ENCODE measurements at regions of chr4 and their contacts with region 1.

Region 1: DNA sequence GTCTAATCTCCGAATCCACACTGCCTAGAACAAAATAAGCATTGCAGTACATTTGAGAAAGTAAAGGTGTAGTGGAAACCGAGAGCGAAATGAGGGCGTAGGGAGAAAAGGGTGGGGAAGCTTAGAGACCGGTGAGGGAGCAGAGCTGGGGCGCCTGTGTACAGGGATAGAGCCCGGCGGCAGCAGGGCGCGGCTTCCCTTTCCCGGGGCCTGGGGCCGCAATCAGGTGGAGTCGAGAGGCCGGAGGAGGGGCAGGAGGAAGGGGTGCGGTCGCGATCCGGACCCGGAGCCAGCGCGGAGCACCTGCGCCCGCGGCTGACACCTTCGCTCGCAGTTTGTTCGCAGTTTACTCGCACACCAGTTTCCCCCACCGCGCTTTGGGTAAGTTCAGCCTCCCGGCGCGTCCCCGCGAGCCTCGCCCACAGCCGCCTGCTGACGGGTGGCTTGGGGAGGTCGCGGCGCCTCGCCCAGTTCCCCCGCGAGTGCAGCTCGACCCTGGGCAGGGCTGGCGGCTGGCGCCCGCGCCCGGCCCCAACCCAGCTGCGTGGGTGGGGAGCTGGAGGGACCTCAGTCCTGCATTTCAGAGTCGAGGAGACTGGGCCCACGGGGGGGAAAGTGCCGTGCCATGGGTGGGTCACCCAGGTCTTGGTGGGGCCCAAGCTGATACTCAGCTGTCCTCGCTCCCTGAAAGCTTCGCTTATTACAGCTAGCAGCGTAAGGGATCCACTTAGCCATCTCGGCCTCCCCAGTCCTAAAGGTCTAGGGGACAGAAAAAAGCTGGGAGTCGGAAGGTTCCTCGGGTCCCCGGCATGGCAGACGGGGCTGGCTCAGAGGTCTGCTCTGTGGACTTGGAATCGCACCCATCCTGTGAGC is at the start of gene ANXA3:
- DNase-seq: peak; percentile 70
- H3K4me3 ChIP-seq: peak within 1 kb of the TSS; percentile 76 to 97 (median 82)
- H3K27ac ChIP-seq: peak within 1 kb of the TSS; percentile 100
- H3K4me1 ChIP-seq: peaks cover 39% of the 10 kb centered on the region
- H3K27me3 ChIP-seq: no peaks in the 10 kb centered on the region
- CTCF ChIP-seq: peak in 1 of 2 donors; percentile 0
- total RNA-seq, gene ANXA3: 325 to 422 TPM

Region 2: GRCh38 chr4:78569291-78569821 is 17.6 kb after region 1 on chr4:
- CTCF ChIA-PET with region 1: no interaction called
- dilution Hi-C with region 1: no loop called
- in situ Hi-C with region 1: no loop called
- intact Hi-C with region 1: loop called (anchors 1 kb)
- DNase-seq: peak; percentile 71
- H3K4me3 ChIP-seq: no peak overlapping the region
- H3K27ac ChIP-seq: peak overlapping the region; percentile 97
- H3K4me1 ChIP-seq: peaks cover 62% of the 10 kb centered on the region
- H3K27me3 ChIP-seq: no peaks in the 10 kb centered on the region
- CTCF ChIP-seq: no peak

Region 3: GRCh38 chr4:78784236-78784865 is 232.6 kb after region 1 on chr4:
- CTCF ChIA-PET with region 1: no interaction called
- dilution Hi-C with region 1: no loop called
- in situ Hi-C with region 1: no loop called
- intact Hi-C with region 1: no loop called
- DNase-seq: peak; percentile 66
- H3K4me3 ChIP-seq: no peak overlapping the region
- H3K27ac ChIP-seq: no peak overlapping the region
- H3K4me1 ChIP-seq: peaks cover 8% of the 10 kb centered on the region
- H3K27me3 ChIP-seq: no peaks in the 10 kb centered on the region
- CTCF ChIP-seq: no peak